Ascending aorta (tissue), 2 donors: ENCODE measurements at regions of chr2 and their contacts with region 1.

Region 1: GRCh38 chr2:111113838-111114237 is 6.9 kb upstream of the BCL2L11 start:
- DNase-seq: no peak
- H3K4me3 ChIP-seq: no peak overlapping the region
- H3K27ac ChIP-seq: no peak overlapping the region
- H3K4me1 ChIP-seq: peaks cover 0 to 10% of the 10 kb centered on the region in 2 donors
- H3K27me3 ChIP-seq: no peaks in the 10 kb centered on the region
- CTCF ChIP-seq: no peak

Region 2: DNA sequence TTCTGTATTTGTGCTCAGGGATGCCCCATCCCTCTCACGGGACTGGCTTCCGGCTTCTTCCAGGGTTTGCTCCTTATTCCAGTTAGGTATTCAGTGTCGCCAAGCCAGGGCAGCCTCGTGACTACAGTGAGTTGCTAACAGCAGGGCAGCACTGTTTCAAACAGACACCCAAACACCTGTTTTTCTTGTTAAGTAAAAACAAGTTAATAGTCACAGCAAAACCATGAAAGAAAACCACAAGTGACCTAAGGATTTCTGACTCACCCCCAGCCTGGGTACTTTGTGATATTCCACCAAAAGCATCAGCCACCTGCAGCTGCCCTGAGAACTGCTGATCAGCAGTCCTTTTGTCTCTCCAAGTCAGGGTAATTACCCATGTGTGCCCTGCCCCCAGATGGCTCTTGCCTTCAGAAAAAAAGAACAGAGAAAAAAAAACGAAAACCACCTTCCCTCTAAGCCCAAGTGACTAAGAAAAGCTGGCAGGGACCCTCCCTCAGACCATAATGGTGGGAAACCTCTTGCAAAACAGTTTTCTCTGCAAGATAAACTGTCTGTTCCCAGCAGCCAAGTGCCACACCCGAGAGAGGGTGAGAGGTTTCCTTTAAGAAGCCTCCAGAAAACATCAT is 592.0 kb after region 1 on chr2:
- intact Hi-C with region 1: loop called (anchors 1 kb)
- DNase-seq: peak in 1 of 2 donors; percentile 63
- H3K4me3 ChIP-seq: no peak overlapping the region
- H3K27ac ChIP-seq: no peak overlapping the region
- H3K4me1 ChIP-seq: peaks cover 0 to 7% of the 10 kb centered on the region in 2 donors
- H3K27me3 ChIP-seq: no peaks in the 10 kb centered on the region
- CTCF ChIP-seq: no peak